CD8-positive, alpha-beta memory T cell (primary cell): ENCODE measurements at regions of chr11 and their contacts with region 1.

Region 1: GRCh38 chr11:406978-407739 is 7.6 kb downstream of the SIGIRR start:
- DNase-seq: peak; percentile 94 to 98 (median 96)
- H3K4me3 ChIP-seq: peak overlapping the region; percentile 43
- H3K4me3 Mint-ChIP-seq: peak overlapping the region in 6 of 7 donors; percentile 24 to 78 (median 35)
- H3K27ac ChIP-seq: peak overlapping the region; percentile 70
- H3K27ac Mint-ChIP-seq: peak overlapping the region; percentile 34 to 91 (median 74)
- H3K4me1 ChIP-seq: peaks cover 20% of the 10 kb centered on the region
- H3K4me1 Mint-ChIP-seq: peaks cover 0 to 32% (median 12%) of the 10 kb centered on the region in 3 donors
- H3K27me3 ChIP-seq: no peaks in the 10 kb centered on the region
- H3K27me3 Mint-ChIP-seq: no peaks in the 10 kb centered on the region

Region 2: GRCh38 chr11:269146-269890 is 137.8 kb before region 1 on chr11:
- CTCF ChIA-PET with region 1: no interaction called
- POLR2A ChIA-PET with region 1: interaction called, 17 read pairs
- DNase-seq: peak; percentile 24 to 88 (median 72)
- H3K4me3 ChIP-seq: peak overlapping the region; percentile 49
- H3K4me3 Mint-ChIP-seq: peak overlapping the region; percentile 84 to 94 (median 90)
- H3K27ac ChIP-seq: peak overlapping the region; percentile 78
- H3K27ac Mint-ChIP-seq: peak overlapping the region; percentile 89 to 100 (median 96)
- H3K4me1 ChIP-seq: peaks cover 22% of the 10 kb centered on the region
- H3K4me1 Mint-ChIP-seq: peaks cover 30 to 43% (median 31%) of the 10 kb centered on the region in 3 donors
- H3K27me3 ChIP-seq: no peaks in the 10 kb centered on the region
- H3K27me3 Mint-ChIP-seq: peaks cover 0 to 2% of the 10 kb centered on the region in 2 donors

Region 3: GRCh38 chr11:396948-397548 is 10.1 kb before region 1 on chr11:
- CTCF ChIA-PET with region 1: interaction called, 6 read pairs
- POLR2A ChIA-PET with region 1: interaction called, 22 read pairs
- DNase-seq: peak in 4 of 5 donors; percentile 36 to 72 (median 42)
- H3K4me3 ChIP-seq: no peak overlapping the region
- H3K4me3 Mint-ChIP-seq: peak overlapping the region in 5 of 7 donors; percentile 1 to 53 (median 47)
- H3K27ac ChIP-seq: no peak overlapping the region
- H3K27ac Mint-ChIP-seq: no peak overlapping the region
- H3K4me1 ChIP-seq: peaks cover 4% of the 10 kb centered on the region
- H3K4me1 Mint-ChIP-seq: peaks cover 0 to 11% (median 0%) of the 10 kb centered on the region in 3 donors
- H3K27me3 ChIP-seq: no peaks in the 10 kb centered on the region
- H3K27me3 Mint-ChIP-seq: peaks cover 0 to 2% of the 10 kb centered on the region in 2 donors

Region 4: GRCh38 chr11:477052-477715 is 70.0 kb after region 1 on chr11:
- CTCF ChIA-PET with region 1: no interaction called
- POLR2A ChIA-PET with region 1: no interaction called
- DNase-seq: no peak
- H3K4me3 ChIP-seq: no peak overlapping the region
- H3K4me3 Mint-ChIP-seq: no peak overlapping the region
- H3K27ac ChIP-seq: no peak overlapping the region
- H3K27ac Mint-ChIP-seq: peak overlapping the region in 1 of 8 donors; percentile 9
- H3K4me1 ChIP-seq: no peaks in the 10 kb centered on the region
- H3K4me1 Mint-ChIP-seq: no peaks in the 10 kb centered on the region
- H3K27me3 ChIP-seq: no peaks in the 10 kb centered on the region
- H3K27me3 Mint-ChIP-seq: no peaks in the 10 kb centered on the region

Region 5: GRCh38 chr11:506238-506994 is 99.3 kb after region 1 on chr11:
- CTCF ChIA-PET with region 1: no interaction called
- POLR2A ChIA-PET with region 1: interaction called, 11 read pairs
- DNase-seq: peak; percentile 96 to 98 (median 96)
- H3K4me3 ChIP-seq: peak overlapping the region; percentile 95
- H3K4me3 Mint-ChIP-seq: peak overlapping the region; percentile 89 to 100 (median 98)
- H3K27ac ChIP-seq: peak overlapping the region; percentile 100
- H3K27ac Mint-ChIP-seq: peak overlapping the region; percentile 97 to 100 (median 100)
- H3K4me1 ChIP-seq: peaks cover 31% of the 10 kb centered on the region
- H3K4me1 Mint-ChIP-seq: peaks cover 11 to 38% (median 21%) of the 10 kb centered on the region in 3 donors
- H3K27me3 ChIP-seq: no peaks in the 10 kb centered on the region
- H3K27me3 Mint-ChIP-seq: peaks cover 0 to 4% of the 10 kb centered on the region in 2 donors